ENCODE measurements at regions of chr6 and their contacts with region 1.

Region 1: DNA sequence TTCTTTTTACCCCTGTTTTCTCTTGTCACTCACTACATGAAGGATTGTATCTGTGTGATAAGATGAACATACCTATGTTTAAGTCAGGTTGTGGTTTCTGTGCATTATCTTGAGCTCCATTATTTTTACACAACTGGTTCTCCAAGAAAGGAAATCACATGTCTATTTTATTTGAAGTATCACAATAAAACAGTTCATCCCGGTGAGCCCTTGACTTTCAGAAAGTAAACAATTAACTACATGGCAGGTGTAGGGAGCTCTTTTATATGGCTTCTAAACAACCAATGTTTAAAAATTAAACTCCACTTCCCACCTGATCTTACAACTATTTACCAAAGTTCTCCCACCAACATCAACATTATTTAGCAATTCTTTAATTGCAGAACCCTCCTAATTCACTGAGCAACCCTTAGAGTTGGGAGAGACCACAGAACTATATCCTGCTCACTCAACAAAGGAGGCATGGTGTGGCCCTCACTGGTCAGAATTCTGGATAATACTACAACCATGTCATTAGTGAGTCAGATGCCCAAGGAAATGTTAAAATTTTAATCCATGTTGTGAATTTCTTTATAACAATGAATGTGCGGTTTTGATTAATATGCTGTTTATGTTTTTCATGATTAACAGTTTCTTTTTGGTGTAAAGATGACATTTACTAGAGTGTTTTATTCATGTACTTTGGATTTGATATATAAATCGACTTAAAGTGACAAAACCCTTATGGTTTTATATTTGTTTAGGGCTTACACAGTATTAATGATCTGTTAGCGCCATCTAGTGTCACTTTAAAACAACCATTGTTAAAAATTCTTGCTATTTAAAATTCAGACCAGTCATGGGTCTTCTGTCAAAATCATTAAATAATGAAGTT is 50.0 kb upstream of the SCGN start:
- DNase-seq: no peak
- H3K4me3 Mint-ChIP-seq: no peak overlapping the region
- H3K27ac Mint-ChIP-seq: no peak overlapping the region
- H3K4me1 Mint-ChIP-seq: peaks cover 6% of the 10 kb centered on the region
- H3K27me3 Mint-ChIP-seq: no peaks in the 10 kb centered on the region

Region 2: GRCh38 chr6:25463441-25463840 is 138.6 kb before region 1 on chr6:
- CTCF ChIA-PET with region 1: no interaction called
- intact Hi-C with region 1: no loop called
- DNase-seq: no peak
- H3K4me3 Mint-ChIP-seq: no peak overlapping the region
- H3K27ac Mint-ChIP-seq: no peak overlapping the region
- H3K4me1 Mint-ChIP-seq: no peaks in the 10 kb centered on the region
- H3K27me3 Mint-ChIP-seq: no peaks in the 10 kb centered on the region

Region 3: GRCh38 chr6:25556516-25556915 is 45.5 kb before region 1 on chr6:
- CTCF ChIA-PET with region 1: interaction called, 6 read pairs
- intact Hi-C with region 1: loop called (anchors 2 kb)
- DNase-seq: peak; percentile 92
- H3K4me3 Mint-ChIP-seq: no peak overlapping the region
- H3K27ac Mint-ChIP-seq: no peak overlapping the region
- H3K4me1 Mint-ChIP-seq: no peaks in the 10 kb centered on the region
- H3K27me3 Mint-ChIP-seq: no peaks in the 10 kb centered on the region

Region 4: GRCh38 chr6:25804804-25805203 is 202.8 kb after region 1 on chr6:
- CTCF ChIA-PET with region 1: no interaction called
- intact Hi-C with region 1: no loop called
- DNase-seq: no peak
- H3K4me3 Mint-ChIP-seq: no peak overlapping the region
- H3K27ac Mint-ChIP-seq: no peak overlapping the region
- H3K4me1 Mint-ChIP-seq: no peaks in the 10 kb centered on the region
- H3K27me3 Mint-ChIP-seq: peaks cover 27% of the 10 kb centered on the region

Measured in activated naive CD4-positive, alpha-beta T cell treated with anti-CD3 and anti-CD28 coated beads for 36 hours (primary cell).